HCT116 (cell line): ENCODE measurements at regions of chr1 and their contacts with region 1.

Region 1: DNA sequence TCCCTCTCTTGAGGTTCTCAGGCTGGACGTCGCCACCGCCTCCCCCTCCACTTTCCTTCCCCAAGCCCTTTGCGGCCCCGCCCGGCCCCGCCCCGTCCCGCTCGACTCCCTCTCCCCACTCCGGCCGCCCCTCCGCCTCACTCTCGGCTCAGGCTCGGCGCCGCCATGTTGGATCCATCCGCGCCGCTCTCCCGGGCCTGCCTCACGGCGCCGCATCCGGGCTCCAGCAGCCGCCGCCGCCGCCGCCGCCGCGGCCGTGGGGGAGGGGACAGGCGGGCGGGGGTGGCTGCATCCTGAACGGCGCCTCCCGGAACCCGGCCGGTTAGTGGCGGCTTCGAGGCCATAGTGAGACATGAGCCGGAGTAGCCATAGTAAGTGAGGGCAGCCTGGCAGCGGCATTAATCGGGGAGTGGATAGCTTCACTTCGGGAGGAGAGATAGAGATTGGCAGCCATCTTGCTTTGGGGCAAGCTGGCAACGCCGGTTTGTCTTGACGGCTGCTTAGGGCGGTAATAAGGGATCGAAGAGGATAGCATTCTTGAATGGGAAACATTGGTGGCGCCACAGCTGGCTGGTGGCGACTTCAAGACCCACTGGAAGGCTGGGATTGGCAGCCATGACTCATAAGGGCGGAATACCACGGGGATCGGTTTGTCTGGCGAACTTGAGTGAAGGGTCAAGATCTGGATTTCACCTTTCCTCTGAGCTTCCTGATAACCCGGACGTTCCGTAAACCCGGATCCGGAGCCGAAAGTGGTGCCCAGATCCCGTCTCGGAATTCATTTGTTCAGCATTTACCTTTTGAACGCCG is at the start of gene DEDD:
- DNase-seq: peak; percentile 98
- ATAC-seq: peak; percentile 86
- H3K4me3 ChIP-seq: peak within 1 kb of the TSS; percentile 81 to 85
- H3K27ac ChIP-seq: peak within 1 kb of the TSS; percentile 91
- H3K4me1 ChIP-seq: peaks cover 10 to 20% of the 10 kb centered on the region in 2 experiments; a peak in 3 of 4 replicates
- H3K27me3 ChIP-seq: no peaks in the 10 kb centered on the region
- CTCF ChIP-seq: no peak
- POLR2A ChIP-seq: peak; percentile 31
- RAD21 ChIP-seq: no peak
- total RNA-seq, gene DEDD: 32.8 TPM

Region 2: DNA sequence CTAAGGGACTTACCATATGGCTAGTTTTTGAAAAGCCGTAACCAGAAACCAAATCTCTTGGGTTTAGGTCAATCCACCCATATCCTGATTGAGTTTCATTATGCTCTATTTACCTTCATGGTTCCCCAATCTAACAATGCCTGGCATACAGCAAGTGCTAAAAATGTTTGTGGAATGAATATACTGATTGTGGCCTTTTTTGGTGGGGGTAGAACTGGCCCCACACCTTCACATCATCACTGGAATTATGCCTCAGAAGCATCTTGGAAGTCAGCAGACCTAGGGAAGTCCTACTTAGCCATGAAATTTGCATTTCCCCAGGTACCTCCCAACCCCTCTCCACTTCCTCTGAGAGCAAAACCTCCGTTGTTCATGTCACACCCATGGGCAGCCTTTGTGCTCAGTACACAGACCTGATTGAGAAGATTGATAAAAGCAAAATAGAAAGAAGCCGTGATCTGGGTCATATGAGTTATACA is 468.0 kb before region 1 on chr1:
- CTCF ChIA-PET with region 1: no interaction called
- POLR2A ChIA-PET with region 1: no interaction called
- RAD21 ChIA-PET with region 1: no interaction called
- intact Hi-C with region 1: no loop called
- DNase-seq: no peak
- ATAC-seq: no peak
- H3K4me3 ChIP-seq: no peak overlapping the region
- H3K27ac ChIP-seq: no peak overlapping the region
- H3K4me1 ChIP-seq: no peaks in the 10 kb centered on the region
- H3K27me3 ChIP-seq: no peaks in the 10 kb centered on the region
- CTCF ChIP-seq: no peak
- POLR2A ChIP-seq: no peak
- RAD21 ChIP-seq: no peak

Region 3: GRCh38 chr1:161153679-161154426 is 21.2 kb after region 1 on chr1 and contains the start of gene UFC1:
- CTCF ChIA-PET with region 1: interaction called, 4 read pairs
- POLR2A ChIA-PET with region 1: interaction called, 10 read pairs
- RAD21 ChIA-PET with region 1: no interaction called
- intact Hi-C with region 1: no loop called
- DNase-seq: peak; percentile 87
- ATAC-seq: peak; percentile 92
- H3K4me3 ChIP-seq: peak within 1 kb of the TSS; percentile 66 to 87
- H3K27ac ChIP-seq: peak within 1 kb of the TSS; percentile 99
- H3K4me1 ChIP-seq: peaks cover 5 to 20% of the 10 kb centered on the region in 2 experiments; a peak in 3 of 4 replicates
- H3K27me3 ChIP-seq: no peaks in the 10 kb centered on the region
- CTCF ChIP-seq: no peak
- POLR2A ChIP-seq: no peak
- RAD21 ChIP-seq: no peak
- total RNA-seq, gene UFC1: 63.7 TPM

Region 4: DNA sequence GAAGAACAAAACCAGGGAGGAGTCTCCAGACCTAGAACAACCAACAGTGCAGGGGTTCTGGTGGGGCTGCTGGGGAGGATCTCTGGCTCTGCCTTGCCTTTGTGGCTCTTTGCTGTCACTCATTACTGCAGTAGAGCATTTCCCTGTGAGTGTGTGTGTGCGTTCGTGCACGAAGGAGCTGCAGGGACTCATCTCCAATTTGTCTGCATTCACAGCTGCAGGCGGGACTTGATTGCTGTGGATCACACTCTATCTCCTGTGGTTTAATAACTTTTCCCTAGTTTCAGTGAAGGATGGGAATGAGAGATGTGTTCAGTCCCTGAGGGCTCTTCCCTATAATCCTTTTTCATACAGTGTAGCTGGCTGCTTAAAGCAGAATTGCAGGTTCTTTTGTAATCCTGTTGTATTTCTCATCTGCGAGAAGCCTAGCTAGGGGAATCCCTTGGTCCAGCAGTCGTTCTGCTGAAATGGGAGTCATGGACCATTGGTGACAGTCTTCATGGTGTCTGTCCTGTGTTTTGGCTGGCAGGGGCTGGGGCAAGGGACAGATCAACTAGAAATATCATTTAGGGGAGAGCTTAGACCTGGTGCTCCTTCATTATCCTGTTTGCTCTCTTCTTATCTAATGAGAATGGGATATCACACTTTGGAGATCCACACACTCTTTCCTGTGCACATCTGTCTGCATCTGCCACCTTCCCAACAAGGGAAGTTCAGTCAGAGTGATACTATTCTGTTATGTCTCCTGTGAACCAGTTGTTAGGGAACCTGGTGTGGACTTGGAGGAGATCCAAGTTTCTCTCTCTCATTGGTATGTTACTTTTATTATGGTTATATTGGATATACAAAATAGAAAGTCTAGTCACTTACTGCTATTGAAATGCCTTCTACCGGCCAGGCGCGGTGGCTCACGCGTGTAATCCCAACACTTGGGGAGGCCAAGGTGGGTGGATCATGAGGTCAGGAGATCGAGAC is 128.9 kb after region 1 on chr1:
- CTCF ChIA-PET with region 1: no interaction called
- POLR2A ChIA-PET with region 1: no interaction called
- RAD21 ChIA-PET with region 1: no interaction called
- intact Hi-C with region 1: no loop called
- DNase-seq: no peak
- ATAC-seq: no peak
- H3K4me3 ChIP-seq: no peak overlapping the region
- H3K27ac ChIP-seq: no peak overlapping the region
- H3K4me1 ChIP-seq: peaks cover 0 to 5% of the 10 kb centered on the region in 2 experiments; a peak in 1 of 4 replicates
- H3K27me3 ChIP-seq: peaks cover 14% of the 10 kb centered on the region
- CTCF ChIP-seq: no peak
- POLR2A ChIP-seq: no peak
- RAD21 ChIP-seq: no peak

Region 5: DNA sequence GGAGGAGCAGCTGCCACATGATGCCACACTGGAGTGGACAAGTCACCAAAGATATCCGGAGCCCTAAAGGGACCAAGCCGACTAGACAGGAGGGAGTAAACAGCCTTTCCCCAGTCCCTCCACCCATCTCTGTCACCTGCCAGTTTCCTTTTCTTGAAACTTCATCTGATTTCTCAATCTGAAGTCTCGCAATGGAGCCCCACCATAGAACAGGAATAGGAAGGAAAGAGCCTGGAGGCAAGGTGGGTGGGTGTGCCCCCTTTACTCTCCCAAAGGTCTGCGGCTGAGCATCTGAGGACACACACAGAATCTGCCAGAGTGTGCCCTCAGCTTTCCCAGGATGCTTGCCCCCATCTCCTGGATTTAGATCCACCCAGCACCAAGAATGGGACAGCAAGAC is 498.5 kb after region 1 on chr1 and contains the start of gene FCGR3B:
- CTCF ChIA-PET with region 1: no interaction called
- POLR2A ChIA-PET with region 1: no interaction called
- RAD21 ChIA-PET with region 1: no interaction called
- intact Hi-C with region 1: no loop called
- DNase-seq: no peak
- ATAC-seq: no peak
- H3K4me3 ChIP-seq: no peak within 1 kb of the TSS
- H3K27ac ChIP-seq: no peak within 1 kb of the TSS
- H3K4me1 ChIP-seq: no peaks in the 10 kb centered on the region
- H3K27me3 ChIP-seq: no peaks in the 10 kb centered on the region
- CTCF ChIP-seq: no peak
- POLR2A ChIP-seq: no peak
- RAD21 ChIP-seq: no peak
- total RNA-seq, gene FCGR3B: not detected